Prostate gland (tissue), 2 donors: ENCODE measurements at regions of chr3 and their contacts with region 1.

Region 1: DNA sequence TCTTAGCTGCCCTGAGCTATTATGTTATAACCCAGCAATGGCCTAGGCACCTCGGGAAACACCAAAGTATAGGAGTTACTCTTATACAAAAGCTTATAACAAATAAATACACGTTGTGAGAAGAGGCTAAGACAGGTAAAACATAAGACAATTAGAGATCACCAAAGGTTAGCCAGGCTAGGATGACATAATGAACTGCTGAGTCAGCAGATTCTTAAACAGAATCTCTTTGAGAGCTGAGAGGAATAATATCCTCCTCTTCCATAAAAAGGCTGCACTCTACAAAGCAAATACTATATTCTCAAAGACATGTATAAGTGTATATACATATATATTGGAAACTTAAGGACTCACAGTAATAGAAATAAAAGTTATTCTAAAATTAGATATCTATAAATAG is 37.2 kb downstream of the GOLIM4 start:
- DNase-seq: no peak
- H3K4me3 ChIP-seq: no peak overlapping the region
- H3K27ac ChIP-seq: no peak overlapping the region
- H3K4me1 ChIP-seq: no peaks in the 10 kb centered on the region
- H3K27me3 ChIP-seq: no peaks in the 10 kb centered on the region
- CTCF ChIP-seq: no peak
- POLR2A ChIP-seq: no peak

Region 2: GRCh38 chr3:168095611-168096209 is 37.2 kb after region 1 on chr3 and contains the start of gene GOLIM4:
- intact Hi-C with region 1: loop called (anchors 5 kb)
- DNase-seq: peak; percentile 94
- H3K4me3 ChIP-seq: peak within 1 kb of the TSS; percentile 65 to 70
- H3K27ac ChIP-seq: peak within 1 kb of the TSS; percentile 87 to 89
- H3K4me1 ChIP-seq: no peaks in the 10 kb centered on the region
- H3K27me3 ChIP-seq: no peaks in the 10 kb centered on the region
- CTCF ChIP-seq: peak in 1 of 4 experiments; percentile 14
- POLR2A ChIP-seq: peak; percentile 63
- total RNA-seq, gene GOLIM4: 22.3 to 25.5 TPM